GM12878 (cell line): ENCODE measurements at regions of chr3 and their contacts with region 1.

Region 1: DNA sequence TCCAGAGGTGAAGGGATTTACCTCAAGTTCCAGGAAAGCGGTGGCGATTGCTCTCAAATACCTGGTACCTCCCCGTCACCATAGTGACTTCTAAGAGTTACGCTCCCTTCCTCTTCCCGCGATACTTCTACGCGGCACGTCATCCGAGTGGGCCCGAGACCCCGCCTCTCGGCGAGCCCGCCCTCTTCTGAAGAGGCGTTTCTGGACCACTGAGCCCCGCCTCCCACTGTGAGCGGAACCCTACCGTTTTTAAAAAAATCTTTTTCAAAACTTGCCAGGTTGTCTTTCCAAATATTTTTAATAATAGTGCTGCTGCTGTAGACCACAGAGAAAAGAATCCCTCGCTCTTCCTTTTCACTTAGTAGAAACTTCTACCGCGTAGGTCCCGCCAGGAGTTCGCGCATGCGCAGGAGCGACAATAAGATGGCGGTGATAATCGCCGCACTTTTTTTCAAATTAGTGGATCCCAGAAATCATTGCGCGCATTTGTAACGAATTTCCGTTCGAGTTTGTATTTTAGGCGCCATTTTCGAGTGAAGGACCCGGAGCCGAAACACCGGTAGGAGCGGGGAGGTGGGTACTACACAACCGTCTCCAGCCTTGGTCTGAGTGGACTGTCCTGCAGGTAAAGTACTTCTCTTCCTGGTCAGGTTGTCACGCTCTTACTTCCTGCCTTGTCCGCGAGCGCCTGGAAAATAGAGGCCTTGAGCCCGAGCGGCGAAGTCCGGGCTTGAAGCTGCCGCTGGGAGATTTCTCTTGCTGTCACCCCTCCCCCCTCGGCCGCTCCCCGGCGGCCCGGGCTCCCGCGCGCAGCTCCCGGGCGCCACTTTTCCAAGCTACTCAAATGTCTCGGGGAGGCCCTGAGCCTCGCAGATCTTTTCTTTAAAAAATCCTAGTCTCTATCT is at the starts of genes IFT80 and SMC4:
- DNase-seq: peak; percentile 84
- ATAC-seq: peak; percentile 87
- H3K4me3 ChIP-seq: peak within 1 kb of the TSS; percentile 99
- H3K27ac ChIP-seq: peak within 1 kb of the TSS; percentile 90
- H3K4me1 ChIP-seq: no peaks in the 10 kb centered on the region
- H3K27me3 ChIP-seq: no peaks in the 10 kb centered on the region
- CTCF ChIP-seq: no peak
- EP300 ChIP-seq: no peak
- POLR2A ChIP-seq: peak; percentile 79
- RAD21 ChIP-seq: no peak
- polyA plus RNA-seq, gene IFT80: 6.5 to 6.7 TPM
- polyA plus RNA-seq, gene SMC4: 75.6 to 127 TPM

Region 2: DNA sequence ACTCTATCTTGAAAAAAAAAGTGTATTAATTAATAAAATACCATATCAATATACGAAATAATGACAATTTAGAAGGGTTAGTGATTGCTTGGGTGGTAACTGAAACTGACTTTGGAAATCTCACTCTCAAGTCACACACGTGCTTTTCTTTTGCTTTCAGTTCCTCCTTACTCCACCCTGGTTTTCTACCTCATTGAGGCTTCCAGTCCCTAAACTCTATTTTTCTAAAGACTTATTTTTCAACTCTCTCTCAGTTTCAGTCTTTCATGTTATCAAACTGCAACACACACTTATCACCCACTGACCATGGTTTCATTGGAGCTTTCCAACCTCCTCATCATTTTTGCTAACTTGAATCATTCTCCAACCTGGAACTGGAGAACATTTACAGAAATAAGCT is 387.3 kb before region 1 on chr3:
- CTCF ChIA-PET with region 1: no interaction called
- POLR2A ChIA-PET with region 1: no interaction called
- RAD21 ChIA-PET with region 1: no interaction called
- SMC1A ChIA-PET with region 1: no interaction called
- in situ Hi-C with region 1: no loop called
- intact Hi-C with region 1: loop called (anchors 5 kb)
- DNase-seq: peak; percentile 81
- ATAC-seq: peak; percentile 83
- H3K4me3 ChIP-seq: peak overlapping the region; percentile 22; the same call in 1 of the 2 replicates
- H3K27ac ChIP-seq: peak overlapping the region; percentile 94
- H3K4me1 ChIP-seq: peaks cover 48% of the 10 kb centered on the region
- H3K27me3 ChIP-seq: no peaks in the 10 kb centered on the region
- CTCF ChIP-seq: no peak
- EP300 ChIP-seq: peak; percentile 87 to 95; a peak in 3 of 4 replicates
- POLR2A ChIP-seq: no peak
- RAD21 ChIP-seq: no peak

Region 3: GRCh38 chr3:160226026-160226907 is 173.1 kb before region 1 on chr3:
- CTCF ChIA-PET with region 1: no interaction called
- POLR2A ChIA-PET with region 1: no interaction called
- RAD21 ChIA-PET with region 1: no interaction called
- SMC1A ChIA-PET with region 1: no interaction called
- in situ Hi-C with region 1: no loop called
- intact Hi-C with region 1: no loop called
- DNase-seq: no peak
- ATAC-seq: no peak; the same call in 1 of the 3 replicates
- H3K4me3 ChIP-seq: peak overlapping the region; percentile 61; the same call in 1 of the 2 replicates
- H3K27ac ChIP-seq: no peak overlapping the region
- H3K4me1 ChIP-seq: peaks cover 7% of the 10 kb centered on the region; the same call in 1 of the 2 replicates
- H3K27me3 ChIP-seq: peaks cover 7 to 26% of the 10 kb centered on the region in 2 experiments
- CTCF ChIP-seq: no peak
- EP300 ChIP-seq: no peak
- POLR2A ChIP-seq: no peak
- RAD21 ChIP-seq: no peak

Region 4: DNA sequence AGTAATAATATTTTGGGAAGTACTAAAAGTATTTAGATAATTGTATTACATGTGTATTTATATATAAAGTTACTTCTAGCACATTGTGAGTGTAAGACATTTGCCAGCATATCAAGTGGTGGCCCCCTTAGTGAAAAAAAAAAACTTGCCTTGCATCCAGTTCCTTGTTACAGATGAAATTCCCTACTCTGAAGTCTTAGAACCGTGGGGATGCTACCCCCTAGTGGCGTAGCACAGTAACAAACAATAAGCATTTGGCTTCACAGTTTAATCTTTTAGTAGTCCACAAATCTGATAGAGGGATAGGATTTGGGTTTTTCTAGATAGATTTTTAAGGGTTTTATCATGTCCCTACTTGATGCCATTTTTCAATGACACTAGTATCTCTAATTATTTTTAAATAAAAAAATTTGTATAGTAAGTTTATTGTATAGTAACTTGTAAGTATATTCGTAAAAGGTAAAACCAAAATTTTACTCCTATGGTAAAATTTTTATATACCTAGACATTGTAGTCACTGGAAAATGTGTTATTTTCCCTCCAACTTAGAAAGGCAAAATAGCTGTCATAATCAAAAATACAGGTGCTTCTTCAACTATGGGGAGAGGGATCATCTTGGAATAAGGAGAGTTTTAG is 14.4 kb after region 1 on chr3:
- CTCF ChIA-PET with region 1: interaction called, 29 read pairs
- POLR2A ChIA-PET with region 1: interaction called, 8 read pairs
- RAD21 ChIA-PET with region 1: interaction called, 14 read pairs
- SMC1A ChIA-PET with region 1: interaction called, 33 read pairs
- in situ Hi-C with region 1: no loop called
- intact Hi-C with region 1: no loop called
- DNase-seq: peak; percentile 19
- ATAC-seq: peak; percentile 72
- H3K4me3 ChIP-seq: no peak overlapping the region
- H3K27ac ChIP-seq: no peak overlapping the region
- H3K4me1 ChIP-seq: no peaks in the 10 kb centered on the region
- H3K27me3 ChIP-seq: no peaks in the 10 kb centered on the region
- CTCF ChIP-seq: peak; percentile 77 to 83 (median 82)
- EP300 ChIP-seq: no peak
- POLR2A ChIP-seq: no peak
- RAD21 ChIP-seq: peak; percentile 93